Naive thymus-derived CD4-positive, alpha-beta T cell (primary cell): ENCODE measurements at regions of chr11 and their contacts with region 1.

Region 1: GRCh38 chr11:11036848-11037732 is 179.2 kb upstream of the ZBED5 start:
- DNase-seq: peak in 7 of 9 donors; percentile 33 to 63 (median 56)
- ATAC-seq: peak; percentile 86
- H3K4me3 ChIP-seq: no peak overlapping the region
- H3K4me3 Mint-ChIP-seq: peak overlapping the region in 5 of 10 donors; percentile 2 to 46 (median 8)
- H3K27ac ChIP-seq: no peak overlapping the region
- H3K27ac Mint-ChIP-seq: peak overlapping the region in 8 of 9 donors; percentile 50 to 93 (median 64)
- H3K4me1 ChIP-seq: peaks cover 0 to 15% of the 10 kb centered on the region in 2 donors
- H3K4me1 Mint-ChIP-seq: peaks cover 0 to 38% (median 25%) of the 10 kb centered on the region in 7 donors
- H3K27me3 ChIP-seq: no peaks in the 10 kb centered on the region
- H3K27me3 Mint-ChIP-seq: peaks cover 0 to 5% (median 0%) of the 10 kb centered on the region in 5 donors

Region 2: DNA sequence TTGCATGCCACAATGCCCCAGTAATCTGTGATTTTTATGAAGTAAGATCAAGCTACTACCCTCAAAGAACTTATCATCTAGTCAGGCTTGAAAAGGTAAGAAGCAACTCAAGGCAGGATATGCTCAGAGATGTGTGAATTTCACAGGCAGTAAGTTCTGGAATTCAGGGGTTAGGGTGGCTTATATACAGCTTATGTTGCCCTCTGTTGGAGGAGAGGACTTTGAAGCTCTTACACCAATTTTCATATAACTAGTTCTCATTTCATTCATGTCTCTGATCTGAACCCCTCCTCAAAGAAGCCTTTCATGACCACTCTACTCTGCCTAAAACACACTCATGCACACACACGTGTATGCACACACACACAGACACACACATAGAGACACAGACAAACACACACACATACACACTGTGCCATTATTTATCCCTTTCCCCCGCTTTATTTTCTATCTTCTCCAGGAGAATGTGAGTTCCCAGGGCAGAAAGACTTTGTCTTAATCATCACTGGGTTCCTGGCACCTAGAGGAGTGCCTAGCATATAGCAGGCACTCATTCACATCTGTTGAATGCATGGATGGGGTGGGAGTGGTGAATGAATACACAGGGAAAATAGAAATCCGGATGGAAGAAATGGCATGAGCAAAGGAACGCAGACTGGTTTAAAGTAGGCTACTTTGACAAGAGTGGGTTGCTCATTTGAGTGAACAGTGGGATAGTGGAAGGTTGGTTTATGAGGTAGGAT is 41.4 kb after region 1 on chr11:
- CTCF ChIA-PET with region 1: interaction called, 4 read pairs
- POLR2A ChIA-PET with region 1: no interaction called
- intact Hi-C with region 1: loop called in 1 of 2 experiments (anchors 5 kb)
- DNase-seq: no peak
- ATAC-seq: no peak
- H3K4me3 ChIP-seq: no peak overlapping the region
- H3K4me3 Mint-ChIP-seq: no peak overlapping the region
- H3K27ac ChIP-seq: no peak overlapping the region
- H3K27ac Mint-ChIP-seq: peak overlapping the region in 2 of 9 donors; percentile 22 to 80
- H3K4me1 ChIP-seq: no peaks in the 10 kb centered on the region
- H3K4me1 Mint-ChIP-seq: peaks cover 2 to 42% (median 33%) of the 10 kb centered on the region in 7 donors
- H3K27me3 ChIP-seq: no peaks in the 10 kb centered on the region
- H3K27me3 Mint-ChIP-seq: peaks cover 0 to 11% (median 0%) of the 10 kb centered on the region in 5 donors

Region 3: DNA sequence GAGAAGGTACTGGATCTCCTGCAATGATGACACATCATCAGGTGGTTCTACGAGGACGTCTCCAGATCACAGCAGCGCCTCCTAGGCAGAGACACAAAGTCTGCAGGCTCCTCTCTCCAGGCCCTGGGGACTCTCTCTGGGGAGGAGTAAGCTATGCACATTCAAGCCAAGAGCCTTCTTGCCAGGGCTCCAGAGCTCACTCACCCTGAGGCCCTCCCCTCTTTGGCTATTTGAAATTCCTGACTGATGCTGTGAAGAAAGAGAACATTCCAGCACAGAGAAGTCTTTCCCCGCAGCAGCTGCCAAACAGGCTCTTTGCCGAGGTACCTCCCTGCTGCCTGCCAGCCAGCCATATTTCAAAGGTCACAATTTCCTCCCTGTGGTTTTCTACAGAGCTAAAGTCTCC is 111.0 kb after region 1 on chr11:
- CTCF ChIA-PET with region 1: interaction called, 210 read pairs
- POLR2A ChIA-PET with region 1: interaction called, 13 read pairs
- intact Hi-C with region 1: loop called in 1 of 2 experiments (anchors 2 kb)
- DNase-seq: peak in 7 of 9 donors; percentile 29 to 43 (median 35)
- ATAC-seq: no peak
- H3K4me3 ChIP-seq: no peak overlapping the region
- H3K4me3 Mint-ChIP-seq: peak overlapping the region in 9 of 10 donors; percentile 20 to 84 (median 70)
- H3K27ac ChIP-seq: peak overlapping the region; percentile 87
- H3K27ac Mint-ChIP-seq: peak overlapping the region in 8 of 9 donors; percentile 93 to 99 (median 98)
- H3K4me1 ChIP-seq: peaks cover 31 to 61% of the 10 kb centered on the region in 2 donors
- H3K4me1 Mint-ChIP-seq: peaks cover 32 to 74% (median 70%) of the 10 kb centered on the region in 7 donors
- H3K27me3 ChIP-seq: no peaks in the 10 kb centered on the region
- H3K27me3 Mint-ChIP-seq: peaks cover 0 to 2% (median 0%) of the 10 kb centered on the region in 5 donors

Region 4: GRCh38 chr11:11157185-11157584 is 120.1 kb after region 1 on chr11:
- CTCF ChIA-PET with region 1: interaction called, 210 read pairs
- POLR2A ChIA-PET with region 1: interaction called, 16 read pairs
- intact Hi-C with region 1: loop called (anchors 1 kb)
- DNase-seq: peak in 8 of 9 donors; percentile 28 to 79 (median 72)
- ATAC-seq: peak; percentile 75
- H3K4me3 ChIP-seq: no peak overlapping the region
- H3K4me3 Mint-ChIP-seq: peak overlapping the region in 6 of 10 donors; percentile 75 to 92 (median 84)
- H3K27ac ChIP-seq: peak overlapping the region; percentile 72
- H3K27ac Mint-ChIP-seq: peak overlapping the region in 8 of 9 donors; percentile 86 to 99 (median 94)
- H3K4me1 ChIP-seq: peaks cover 11 to 28% of the 10 kb centered on the region in 2 donors
- H3K4me1 Mint-ChIP-seq: peaks cover 15 to 49% (median 44%) of the 10 kb centered on the region in 7 donors
- H3K27me3 ChIP-seq: no peaks in the 10 kb centered on the region
- H3K27me3 Mint-ChIP-seq: peaks cover 0 to 8% (median 0%) of the 10 kb centered on the region in 5 donors

Region 5: GRCh38 chr11:11265994-11266606 is 229.0 kb after region 1 on chr11:
- CTCF ChIA-PET with region 1: no interaction called
- POLR2A ChIA-PET with region 1: no interaction called
- intact Hi-C with region 1: loop called (anchors 1 kb)
- DNase-seq: peak in 8 of 9 donors; percentile 11 to 68 (median 28)
- ATAC-seq: peak; percentile 66
- H3K4me3 ChIP-seq: no peak overlapping the region
- H3K4me3 Mint-ChIP-seq: no peak overlapping the region
- H3K27ac ChIP-seq: no peak overlapping the region
- H3K27ac Mint-ChIP-seq: no peak overlapping the region
- H3K4me1 ChIP-seq: no peaks in the 10 kb centered on the region
- H3K4me1 Mint-ChIP-seq: peaks cover 0 to 3% (median 0%) of the 10 kb centered on the region in 7 donors
- H3K27me3 ChIP-seq: no peaks in the 10 kb centered on the region
- H3K27me3 Mint-ChIP-seq: peaks cover 0 to 11% (median 8%) of the 10 kb centered on the region in 5 donors

Region 6: DNA sequence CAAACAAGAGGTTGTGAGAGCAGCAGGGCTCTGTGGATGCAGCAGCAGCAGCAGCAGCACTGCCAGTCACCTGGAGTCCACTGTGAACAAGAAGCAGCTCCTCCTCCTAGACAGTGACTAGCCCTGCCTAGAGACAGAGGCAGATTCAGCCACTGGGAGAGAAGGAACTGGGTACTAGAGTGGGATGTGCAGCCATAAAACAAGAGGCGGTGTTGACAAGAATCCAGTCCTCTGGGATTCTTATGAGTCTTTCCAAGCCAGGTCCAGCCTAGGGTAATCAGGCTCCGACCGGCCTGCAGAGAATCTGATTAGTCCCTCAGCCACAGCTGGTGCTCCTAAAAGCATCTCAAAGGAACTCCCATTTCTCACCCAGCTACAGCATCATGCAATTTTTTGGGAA is 720.8 kb after region 1 on chr11:
- CTCF ChIA-PET with region 1: no interaction called
- POLR2A ChIA-PET with region 1: no interaction called
- intact Hi-C with region 1: no loop called
- DNase-seq: no peak
- ATAC-seq: no peak
- H3K4me3 ChIP-seq: no peak overlapping the region
- H3K4me3 Mint-ChIP-seq: no peak overlapping the region
- H3K27ac ChIP-seq: no peak overlapping the region
- H3K27ac Mint-ChIP-seq: no peak overlapping the region
- H3K4me1 ChIP-seq: no peaks in the 10 kb centered on the region
- H3K4me1 Mint-ChIP-seq: no peaks in the 10 kb centered on the region
- H3K27me3 ChIP-seq: no peaks in the 10 kb centered on the region
- H3K27me3 Mint-ChIP-seq: peaks cover 13 to 49% (median 41%) of the 10 kb centered on the region in 5 donors